Ascending aorta (tissue), 2 donors: ENCODE measurements at regions of chr2 and their contacts with region 1.

Region 1: GRCh38 chr2:204145263-204145751 is 208.7 kb downstream of the ICOS start:
- DNase-seq: peak in 1 of 2 donors; percentile 83
- H3K4me3 ChIP-seq: peak overlapping the region; percentile 34 to 59
- H3K27ac ChIP-seq: peak overlapping the region; percentile 13 to 42
- H3K4me1 ChIP-seq: no peaks in the 10 kb centered on the region
- H3K27me3 ChIP-seq: no peaks in the 10 kb centered on the region
- CTCF ChIP-seq: peak; percentile 68 to 95 (median 95)

Region 2: DNA sequence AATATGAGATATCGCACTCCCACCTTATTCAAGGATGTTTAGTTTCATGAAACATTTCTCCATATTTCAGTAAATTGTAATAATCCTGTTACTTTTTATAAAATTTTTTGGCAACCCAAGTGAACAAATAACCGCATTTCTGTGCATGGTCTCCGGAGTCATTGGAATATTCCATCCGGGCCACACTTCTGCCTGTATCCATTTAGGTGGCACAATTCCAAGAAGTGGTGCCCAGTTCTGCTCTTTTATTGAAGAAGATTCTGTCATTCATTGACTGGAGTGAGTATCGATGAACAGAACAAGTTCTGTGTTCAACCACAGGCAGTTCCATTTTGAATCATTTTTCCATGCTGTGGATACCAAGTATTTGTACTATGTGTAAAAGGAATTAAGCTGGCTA is 235.3 kb before region 1 on chr2:
- intact Hi-C with region 1: loop called (anchors 5 kb)
- DNase-seq: no peak
- H3K4me3 ChIP-seq: peak overlapping the region in 1 of 2 donors; percentile 41
- H3K27ac ChIP-seq: peak overlapping the region; percentile 19 to 31
- H3K4me1 ChIP-seq: peaks cover 3 to 7% of the 10 kb centered on the region in 2 donors
- H3K27me3 ChIP-seq: no peaks in the 10 kb centered on the region
- CTCF ChIP-seq: no peak

Region 3: GRCh38 chr2:204234879-204235278 is 89.6 kb after region 1 on chr2:
- intact Hi-C with region 1: no loop called
- DNase-seq: no peak
- H3K4me3 ChIP-seq: no peak overlapping the region
- H3K27ac ChIP-seq: no peak overlapping the region
- H3K4me1 ChIP-seq: peaks cover 0 to 3% of the 10 kb centered on the region in 2 donors
- H3K27me3 ChIP-seq: no peaks in the 10 kb centered on the region
- CTCF ChIP-seq: no peak

Region 4: DNA sequence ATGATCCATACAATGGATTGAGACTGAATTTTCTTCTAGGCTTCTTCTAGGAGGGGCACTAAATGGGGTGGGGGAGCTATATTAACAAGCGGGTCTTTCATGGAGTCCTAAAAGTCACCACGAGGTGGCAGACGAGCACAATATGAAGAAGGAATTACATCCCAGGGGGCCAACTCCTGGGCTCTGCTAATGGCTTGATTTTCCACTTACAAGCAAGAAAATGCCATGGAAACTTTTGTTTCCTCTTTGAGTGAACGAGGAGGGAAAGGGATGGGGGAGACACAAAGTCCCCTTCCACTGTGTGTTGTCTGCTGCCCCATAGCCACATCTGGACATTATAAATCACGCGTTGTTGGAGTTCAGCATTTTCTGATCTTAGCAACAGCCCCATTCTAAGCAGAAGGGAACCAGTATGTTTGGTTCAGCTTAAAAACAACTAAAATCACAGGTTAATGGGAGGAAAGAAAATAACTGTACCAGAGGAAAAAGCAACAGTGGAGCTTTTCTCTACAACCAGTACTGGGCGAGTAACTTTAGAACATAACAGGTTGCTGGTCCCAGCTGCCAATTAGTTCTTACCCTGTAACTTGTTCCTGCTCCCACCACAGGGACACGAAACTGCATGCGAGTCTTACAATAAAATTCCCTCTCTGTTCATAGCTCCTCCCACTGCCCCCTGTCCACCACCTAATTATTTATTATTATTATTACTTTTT is 115.0 kb after region 1 on chr2:
- intact Hi-C with region 1: loop called (anchors 10 kb)
- DNase-seq: peak; percentile 12 to 85
- H3K4me3 ChIP-seq: no peak overlapping the region
- H3K27ac ChIP-seq: no peak overlapping the region
- H3K4me1 ChIP-seq: peaks cover 0 to 9% of the 10 kb centered on the region in 2 donors
- H3K27me3 ChIP-seq: no peaks in the 10 kb centered on the region
- CTCF ChIP-seq: peak; percentile 51 to 80 (median 79)

Region 5: GRCh38 chr2:204691911-204692510 is 546.7 kb after region 1 on chr2:
- intact Hi-C with region 1: loop called (anchors 5 kb)
- DNase-seq: peak in 1 of 2 donors; percentile 70
- H3K4me3 ChIP-seq: no peak overlapping the region
- H3K27ac ChIP-seq: no peak overlapping the region
- H3K4me1 ChIP-seq: peaks cover 0 to 13% of the 10 kb centered on the region in 2 donors
- H3K27me3 ChIP-seq: no peaks in the 10 kb centered on the region
- CTCF ChIP-seq: peak; percentile 42 to 78 (median 65)

Region 6: DNA sequence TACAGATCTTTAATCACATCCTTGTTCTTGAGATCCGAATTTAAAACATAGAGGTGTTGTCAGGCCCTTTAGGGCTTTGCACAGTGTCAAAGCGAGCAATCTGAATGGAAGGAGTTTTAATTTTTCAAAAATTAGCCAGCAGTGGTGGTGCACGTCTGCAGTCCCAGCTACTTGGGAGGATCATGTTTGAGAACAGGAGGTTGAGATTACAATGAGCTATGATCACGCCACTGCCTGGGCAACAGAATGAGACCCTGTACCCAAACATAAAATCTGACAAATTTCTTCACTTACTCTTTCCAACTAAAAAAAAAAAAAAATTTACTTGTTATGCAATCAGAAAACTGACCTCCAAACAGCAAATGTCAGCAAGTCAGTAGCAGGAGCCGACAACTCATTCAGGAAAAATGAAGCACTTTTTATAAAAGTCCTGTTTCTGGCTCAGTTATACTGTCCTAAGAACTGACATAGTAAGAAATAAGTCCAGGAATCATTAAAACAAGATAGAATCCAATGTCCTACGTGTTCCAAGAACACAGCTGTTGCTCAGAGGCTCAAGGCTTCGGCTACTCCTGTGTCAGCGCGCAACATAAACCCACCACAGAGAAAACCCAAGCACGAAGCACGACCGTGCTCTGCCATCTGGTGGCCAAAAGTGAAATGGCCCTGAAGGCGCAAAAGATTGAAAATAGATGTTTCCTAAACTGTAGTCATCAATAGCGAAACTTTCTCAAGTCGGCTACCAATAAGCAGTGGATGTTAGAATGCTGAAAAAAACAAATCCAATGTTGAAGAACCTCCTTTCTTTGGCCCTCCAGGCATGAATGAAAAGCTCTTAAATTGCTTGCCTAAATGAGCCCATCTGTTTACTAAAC is 1802.6 kb after region 1 on chr2:
- intact Hi-C with region 1: loop called (anchors 10 kb)
- DNase-seq: peak in 1 of 2 donors; percentile 81
- H3K4me3 ChIP-seq: peak overlapping the region; percentile 31 to 41
- H3K27ac ChIP-seq: peak overlapping the region in 1 of 2 donors; percentile 67
- H3K4me1 ChIP-seq: peaks cover 4 to 5% of the 10 kb centered on the region in 2 donors
- H3K27me3 ChIP-seq: no peaks in the 10 kb centered on the region
- CTCF ChIP-seq: peak; percentile 66 to 94 (median 82)